ENCODE measurements at regions of chr12 and their contacts with region 1.

Region 1: GRCh38 chr12:131830335-131830913 is 2.2 kb downstream of the MMP17 start:
- DNase-seq: peak; percentile 74 to 86
- ATAC-seq: peak; percentile 86 to 93 (median 91)
- H3K4me3 ChIP-seq: peak overlapping the region; percentile 29 to 58 (median 56)
- H3K27ac ChIP-seq: peak overlapping the region in 8 of 10 donors; percentile 30 to 68 (median 62)
- H3K4me1 ChIP-seq: peaks cover 8 to 40% (median 30%) of the 10 kb centered on the region in 9 donors
- H3K27me3 ChIP-seq: peaks cover 0 to 87% (median 75%) of the 10 kb centered on the region in 7 donors
- CTCF ChIP-seq: peak; percentile 31 to 77 (median 68)

Region 2: GRCh38 chr12:130916251-130916911 is 914.0 kb before region 1 on chr12:
- intact Hi-C with region 1: loop called in 4 of 10 experiments (anchors 5 kb)
- DNase-seq: peak; percentile 49 to 53
- ATAC-seq: peak; percentile 80 to 92 (median 86)
- H3K4me3 ChIP-seq: peak overlapping the region in 5 of 10 donors; percentile 9 to 42 (median 29)
- H3K27ac ChIP-seq: no peak overlapping the region
- H3K4me1 ChIP-seq: peaks cover 0 to 5% (median 0%) of the 10 kb centered on the region in 9 donors
- H3K27me3 ChIP-seq: peaks cover 0 to 26% (median 12%) of the 10 kb centered on the region in 7 donors
- CTCF ChIP-seq: peak; percentile 84 to 99 (median 92)

Region 3: GRCh38 chr12:131116391-131117117 is 713.9 kb before region 1 on chr12:
- intact Hi-C with region 1: loop called in 1 of 10 experiments (anchors 10 kb)
- DNase-seq: no peak
- ATAC-seq: peak in 7 of 8 donors; percentile 29 to 46 (median 39)
- H3K4me3 ChIP-seq: no peak overlapping the region
- H3K27ac ChIP-seq: peak overlapping the region in 4 of 10 donors; percentile 1 to 39 (median 20)
- H3K4me1 ChIP-seq: peaks cover 0 to 18% (median 6%) of the 10 kb centered on the region in 9 donors
- H3K27me3 ChIP-seq: no peaks in the 10 kb centered on the region
- CTCF ChIP-seq: peak in 6 of 9 donors; percentile 31 to 50 (median 45)

Region 4: DNA sequence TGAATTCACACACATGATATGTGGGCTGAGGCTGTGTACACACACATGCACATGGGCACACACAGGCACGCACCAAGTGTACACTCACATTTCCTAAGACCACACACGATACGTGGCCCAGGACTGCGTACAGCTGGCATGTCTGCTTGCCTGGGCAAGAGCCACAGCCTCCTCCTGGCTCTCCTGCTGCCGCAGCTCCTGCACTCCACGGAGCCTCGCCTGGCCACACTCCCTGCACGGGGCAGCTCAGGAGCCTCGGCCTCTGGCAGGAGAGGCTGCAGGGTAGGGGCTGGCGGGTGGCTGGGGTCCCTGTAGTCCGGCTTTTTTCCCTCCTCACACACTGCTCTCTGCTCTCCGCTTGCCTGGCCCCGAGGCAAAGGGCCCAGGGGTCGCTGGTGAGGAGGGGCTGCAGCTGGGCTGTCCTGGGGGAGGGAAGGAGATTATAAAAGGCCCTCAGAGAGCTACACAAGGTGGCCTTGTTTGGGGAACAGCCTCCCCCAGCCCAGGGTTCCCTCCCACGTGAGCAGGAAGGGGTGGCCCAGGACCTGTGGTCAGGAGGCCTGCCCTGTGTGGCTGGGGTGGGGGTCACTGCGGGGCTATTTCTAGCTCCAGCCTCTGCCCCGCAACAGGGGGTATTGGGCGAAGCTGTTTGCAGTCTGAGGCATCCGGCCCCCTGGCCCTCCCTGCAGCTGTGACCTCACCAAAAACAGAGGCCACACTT is 208.6 kb before region 1 on chr12:
- intact Hi-C with region 1: loop called in 1 of 10 experiments (anchors 10 kb)
- DNase-seq: no peak
- ATAC-seq: peak in 4 of 8 donors; percentile 17 to 39 (median 24)
- H3K4me3 ChIP-seq: no peak overlapping the region
- H3K27ac ChIP-seq: no peak overlapping the region
- H3K4me1 ChIP-seq: peaks cover 0 to 16% (median 7%) of the 10 kb centered on the region in 9 donors
- H3K27me3 ChIP-seq: peaks cover 0 to 70% (median 54%) of the 10 kb centered on the region in 7 donors
- CTCF ChIP-seq: no peak

Region 5: DNA sequence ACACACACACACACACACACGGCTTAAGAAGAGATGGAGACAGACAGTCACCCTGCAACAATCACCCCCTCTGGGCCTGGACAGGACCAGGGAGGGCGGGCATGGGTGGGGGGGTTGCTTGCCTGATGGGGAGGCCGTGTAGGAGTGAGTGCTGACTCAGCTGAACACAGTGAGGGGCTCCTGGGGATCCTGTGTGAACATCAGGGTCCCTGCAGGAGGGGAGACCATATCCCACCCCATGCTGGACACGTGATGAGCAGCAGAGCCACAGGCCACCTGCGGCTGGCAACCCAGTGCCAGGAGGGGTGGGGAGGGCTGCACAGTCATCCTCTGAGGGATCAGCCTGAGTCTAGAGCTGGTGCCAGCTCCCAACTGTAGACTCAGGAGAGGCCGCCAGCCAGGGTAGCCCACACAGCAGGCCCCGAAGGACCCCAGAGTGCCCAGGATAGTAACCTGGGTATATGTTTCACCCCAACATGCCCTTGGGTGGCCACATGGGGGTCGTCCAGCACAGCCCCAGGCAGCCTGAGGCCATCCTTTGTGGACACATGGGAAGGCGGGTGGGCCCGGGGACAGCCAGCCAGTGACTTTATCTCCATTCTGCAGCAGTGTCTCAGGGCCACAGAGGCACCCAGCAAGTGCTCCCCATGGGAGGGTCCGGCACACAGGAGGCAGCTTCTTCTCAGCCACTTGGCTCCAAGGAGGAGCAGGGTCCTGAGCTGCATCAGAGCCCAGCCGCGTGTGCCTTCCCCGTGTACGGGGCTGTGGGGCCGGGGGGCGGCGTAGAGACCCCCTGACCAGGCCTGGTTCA is 193.3 kb before region 1 on chr12:
- intact Hi-C with region 1: no loop called
- DNase-seq: no peak
- ATAC-seq: no peak
- H3K4me3 ChIP-seq: no peak overlapping the region
- H3K27ac ChIP-seq: no peak overlapping the region
- H3K4me1 ChIP-seq: no peaks in the 10 kb centered on the region
- H3K27me3 ChIP-seq: peaks cover 4 to 52% (median 33%) of the 10 kb centered on the region in 7 donors
- CTCF ChIP-seq: no peak

Region 6: GRCh38 chr12:131928711-131929580 is 98.5 kb after region 1 on chr12 and contains the start of gene PUS1:
- intact Hi-C with region 1: loop called in 1 of 10 experiments (anchors 5 kb)
- DNase-seq: peak; percentile 95 to 97
- ATAC-seq: peak; percentile 90 to 96 (median 95)
- H3K4me3 ChIP-seq: peak within 1 kb of the TSS; percentile 52 to 98 (median 80)
- H3K27ac ChIP-seq: peak within 1 kb of the TSS; percentile 88 to 96 (median 92)
- H3K4me1 ChIP-seq: peaks cover 5 to 34% (median 21%) of the 10 kb centered on the region in 9 donors
- H3K27me3 ChIP-seq: no peaks in the 10 kb centered on the region
- CTCF ChIP-seq: peak in 2 of 9 donors; percentile 14 to 24
- total RNA-seq, gene PUS1: 5.1 to 14.8 (median 7.5) TPM

Region 7: GRCh38 chr12:132003846-132004245 is 173.4 kb after region 1 on chr12:
- intact Hi-C with region 1: loop called in 1 of 10 experiments (anchors 10 kb)
- DNase-seq: no peak
- ATAC-seq: no peak
- H3K4me3 ChIP-seq: no peak overlapping the region
- H3K27ac ChIP-seq: no peak overlapping the region
- H3K4me1 ChIP-seq: no peaks in the 10 kb centered on the region
- H3K27me3 ChIP-seq: no peaks in the 10 kb centered on the region
- CTCF ChIP-seq: no peak

Measured in heart right ventricle (tissue), 16 donors.